GM12878 (cell line): ENCODE measurements at regions of chr5 and their contacts with region 1.

Region 1: GRCh38 chr5:119070828-119071572 is at the start of gene DMXL1:
- DNase-seq: peak; percentile 99
- ATAC-seq: peak; percentile 84
- H3K4me3 ChIP-seq: peak within 1 kb of the TSS; percentile 79
- H3K27ac ChIP-seq: peak within 1 kb of the TSS; percentile 91
- H3K4me1 ChIP-seq: peaks cover 5% of the 10 kb centered on the region
- H3K27me3 ChIP-seq: no peaks in the 10 kb centered on the region
- CTCF ChIP-seq: no peak
- EP300 ChIP-seq: 0 out of 4 replicates have a peak, but pooled peaks of 1 of the 2 experiments have one; percentile 8
- POLR2A ChIP-seq: peak; percentile 91
- RAD21 ChIP-seq: no peak
- polyA plus RNA-seq, gene DMXL1: 9.1 to 11.0 TPM

Region 2: GRCh38 chr5:118314931-118315330 is 756.1 kb before region 1 on chr5:
- CTCF ChIA-PET with region 1: no interaction called
- POLR2A ChIA-PET with region 1: no interaction called
- RAD21 ChIA-PET with region 1: no interaction called
- SMC1A ChIA-PET with region 1: no interaction called
- in situ Hi-C with region 1: no loop called
- intact Hi-C with region 1: no loop called
- DNase-seq: no peak
- ATAC-seq: no peak
- H3K4me3 ChIP-seq: no peak overlapping the region
- H3K27ac ChIP-seq: no peak overlapping the region
- H3K4me1 ChIP-seq: no peaks in the 10 kb centered on the region
- H3K27me3 ChIP-seq: no peaks in the 10 kb centered on the region
- CTCF ChIP-seq: no peak
- EP300 ChIP-seq: no peak
- POLR2A ChIP-seq: no peak
- RAD21 ChIP-seq: no peak

Region 3: GRCh38 chr5:118723021-118723338 is 348.0 kb before region 1 on chr5:
- CTCF ChIA-PET with region 1: no interaction called
- POLR2A ChIA-PET with region 1: no interaction called
- RAD21 ChIA-PET with region 1: no interaction called
- SMC1A ChIA-PET with region 1: no interaction called
- in situ Hi-C with region 1: no loop called
- intact Hi-C with region 1: loop called (anchors 10 kb)
- DNase-seq: peak; percentile 69
- ATAC-seq: peak; percentile 91
- H3K4me3 ChIP-seq: no peak overlapping the region
- H3K27ac ChIP-seq: no peak overlapping the region; the same call in none of the 2 replicates
- H3K4me1 ChIP-seq: peaks cover 12% of the 10 kb centered on the region
- H3K27me3 ChIP-seq: no peaks in the 10 kb centered on the region
- CTCF ChIP-seq: no peak
- EP300 ChIP-seq: peak; percentile 88 to 91
- POLR2A ChIP-seq: no peak
- RAD21 ChIP-seq: 0 out of 2 replicates have a peak, but pooled peaks have one; percentile 3

Region 4: GRCh38 chr5:119153629-119154028 is 82.6 kb after region 1 on chr5:
- CTCF ChIA-PET with region 1: no interaction called
- POLR2A ChIA-PET with region 1: no interaction called
- RAD21 ChIA-PET with region 1: no interaction called
- SMC1A ChIA-PET with region 1: no interaction called
- in situ Hi-C with region 1: no loop called
- intact Hi-C with region 1: no loop called
- DNase-seq: no peak
- ATAC-seq: no peak
- H3K4me3 ChIP-seq: no peak overlapping the region
- H3K27ac ChIP-seq: no peak overlapping the region
- H3K4me1 ChIP-seq: no peaks in the 10 kb centered on the region
- H3K27me3 ChIP-seq: no peaks in the 10 kb centered on the region
- CTCF ChIP-seq: no peak
- EP300 ChIP-seq: no peak
- POLR2A ChIP-seq: no peak
- RAD21 ChIP-seq: no peak